Mammary epithelial cell (primary cell): ENCODE measurements at regions of chr13 and their contacts with region 1.

Region 1: DNA sequence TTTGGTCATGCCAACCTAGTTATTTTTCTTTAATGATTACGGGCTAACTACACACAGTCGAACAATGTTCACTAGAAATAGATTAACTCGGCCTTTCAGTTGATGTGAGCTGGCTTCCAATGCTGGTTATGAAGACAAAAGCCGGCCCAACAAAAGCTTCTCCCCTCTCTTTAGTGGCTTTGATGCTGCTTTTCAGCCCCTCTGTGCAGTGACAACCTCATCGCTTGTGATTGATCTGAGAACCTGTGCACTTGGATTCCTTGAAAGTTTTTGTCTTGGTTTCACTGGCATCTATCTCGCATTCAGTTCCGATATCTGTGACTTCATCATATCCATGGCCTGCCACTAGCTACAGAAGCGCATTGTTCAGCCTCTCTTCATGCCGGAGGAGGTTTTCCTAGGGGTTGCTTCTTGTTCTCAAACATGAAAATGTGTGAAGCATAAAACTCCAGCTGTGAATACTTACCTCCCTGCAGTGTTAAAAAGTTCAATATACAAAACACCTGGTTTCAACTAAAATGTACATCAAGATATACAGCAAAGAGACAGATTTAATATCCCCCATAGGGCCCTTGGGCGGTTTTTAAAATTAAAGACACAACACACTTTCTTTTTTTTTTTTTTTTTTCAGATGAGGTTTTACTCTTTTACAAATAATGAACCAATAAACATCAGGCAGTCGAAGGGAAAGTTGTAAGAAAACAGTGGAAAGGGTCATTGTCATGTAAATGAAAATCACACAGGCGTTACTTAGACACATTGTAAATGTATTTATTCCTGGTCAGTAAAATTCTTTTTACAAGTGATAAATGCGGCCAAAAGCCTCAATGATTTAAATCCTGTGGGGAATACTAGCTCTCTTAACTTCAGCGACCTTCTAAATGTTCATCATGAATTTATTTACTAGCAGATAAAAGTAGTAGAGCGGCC is 1252.8 kb downstream of the EFNB2 start:
- DNase-seq: no peak
- H3K4me3 ChIP-seq: no peak overlapping the region
- H3K27ac ChIP-seq: no peak overlapping the region
- H3K4me1 ChIP-seq: no peaks in the 10 kb centered on the region
- H3K27me3 ChIP-seq: no peaks in the 10 kb centered on the region
- CTCF ChIP-seq: no peak

Region 2: GRCh38 chr13:105336706-105337582 is 54.3 kb after region 1 on chr13:
- CTCF ChIA-PET with region 1: no interaction called
- dilution Hi-C with region 1: loop called (anchors 5 kb)
- in situ Hi-C with region 1: no loop called
- intact Hi-C with region 1: no loop called
- DNase-seq: no peak
- H3K4me3 ChIP-seq: no peak overlapping the region
- H3K27ac ChIP-seq: no peak overlapping the region
- H3K4me1 ChIP-seq: no peaks in the 10 kb centered on the region
- H3K27me3 ChIP-seq: no peaks in the 10 kb centered on the region
- CTCF ChIP-seq: no peak